PC-3 (cell line): ENCODE measurements at regions of chr11 and their contacts with region 1.

Region 1: DNA sequence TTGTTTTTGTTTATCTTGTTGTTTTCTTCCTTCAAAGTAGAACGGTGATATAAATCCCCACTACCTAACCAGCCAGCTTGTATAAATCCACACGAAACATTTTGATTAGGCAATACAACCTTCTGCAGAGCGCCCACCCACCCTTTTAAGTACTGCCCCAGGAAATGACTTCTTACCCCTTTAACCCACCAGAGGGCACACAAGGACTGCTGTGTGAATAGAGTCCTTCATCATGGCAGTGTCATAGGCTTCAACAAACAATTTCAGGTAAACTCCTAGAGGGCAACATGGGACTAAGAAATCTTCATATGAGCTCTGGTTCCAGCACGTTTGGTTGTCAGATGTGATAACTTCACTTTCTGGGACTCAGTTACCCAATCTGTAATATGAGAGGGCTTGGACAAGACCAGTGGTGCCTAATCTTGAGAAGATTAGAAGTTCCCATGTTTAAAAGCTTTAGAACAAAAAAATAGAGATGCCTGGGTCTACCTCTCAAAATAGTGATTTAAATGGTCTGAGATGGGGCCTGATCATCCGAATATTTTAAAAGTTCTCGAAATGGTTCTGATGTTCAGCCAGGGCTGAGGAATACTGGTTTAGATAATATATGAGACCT is 56.1 kb downstream of the PIWIL4 start:
- DNase-seq: peak; percentile 95
- ATAC-seq: peak; percentile 96
- H3K4me3 ChIP-seq: no peak overlapping the region
- H3K27ac ChIP-seq: no peak overlapping the region
- H3K4me1 ChIP-seq: peaks cover 4% of the 10 kb centered on the region; the same call in 1 of the 2 replicates
- H3K27me3 ChIP-seq: no peaks in the 10 kb centered on the region
- CTCF ChIP-seq: peak; percentile 99

Region 2: GRCh38 chr11:94715225-94715624 is 92.0 kb after region 1 on chr11:
- CTCF ChIA-PET with region 1: no interaction called
- POLR2A ChIA-PET with region 1: no interaction called
- intact Hi-C with region 1: no loop called
- DNase-seq: no peak
- ATAC-seq: no peak
- H3K4me3 ChIP-seq: no peak overlapping the region
- H3K27ac ChIP-seq: no peak overlapping the region
- H3K4me1 ChIP-seq: no peaks in the 10 kb centered on the region
- H3K27me3 ChIP-seq: no peaks in the 10 kb centered on the region
- CTCF ChIP-seq: no peak

Region 3: DNA sequence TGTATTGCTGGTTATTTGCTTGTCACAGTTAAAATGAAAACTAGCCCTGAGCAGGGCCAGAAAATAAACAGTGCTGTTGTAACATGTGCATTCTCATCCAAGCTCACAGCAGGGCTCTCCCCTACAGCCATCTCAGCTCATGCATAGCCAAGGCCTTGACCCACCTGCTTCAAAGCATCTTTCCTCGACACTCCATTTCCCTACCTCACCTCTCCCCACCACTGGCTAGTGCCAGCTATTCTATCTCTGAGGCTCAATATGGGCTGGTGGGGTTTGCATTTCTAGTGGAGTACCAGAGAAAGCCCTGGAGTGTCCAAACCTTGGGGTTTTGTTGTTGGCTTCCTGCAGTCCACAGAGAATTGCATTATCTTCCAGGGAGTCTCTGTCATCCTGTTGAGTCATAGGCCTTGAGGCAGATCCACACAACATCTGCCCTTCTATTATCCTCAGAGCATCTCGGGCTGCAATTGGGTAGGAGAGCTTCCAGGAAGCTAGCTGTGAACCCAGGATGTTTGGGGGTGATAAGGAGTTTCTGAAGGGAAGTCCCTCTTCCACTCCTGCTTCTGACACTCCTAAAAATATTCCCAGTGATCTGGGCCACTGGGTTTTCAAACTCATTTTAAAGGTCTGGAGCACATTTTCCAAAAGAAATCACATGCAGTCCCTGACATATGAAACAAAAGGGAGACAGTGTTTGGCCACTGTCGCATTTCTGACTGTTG is 108.8 kb after region 1 on chr11:
- CTCF ChIA-PET with region 1: interaction called, 13 read pairs
- POLR2A ChIA-PET with region 1: no interaction called
- intact Hi-C with region 1: loop called (anchors 2 kb)
- DNase-seq: peak; percentile 90
- ATAC-seq: peak; percentile 59
- H3K4me3 ChIP-seq: peak overlapping the region; percentile 4; the same call in 1 of the 2 replicates
- H3K27ac ChIP-seq: peak overlapping the region; percentile 96
- H3K4me1 ChIP-seq: peaks cover 90% of the 10 kb centered on the region
- H3K27me3 ChIP-seq: no peaks in the 10 kb centered on the region
- CTCF ChIP-seq: no peak

Region 4: GRCh38 chr11:94762208-94762607 is 139.0 kb after region 1 on chr11:
- CTCF ChIA-PET with region 1: interaction called, 31 read pairs
- POLR2A ChIA-PET with region 1: no interaction called
- intact Hi-C with region 1: loop called (anchors 1 kb)
- DNase-seq: peak; percentile 88
- ATAC-seq: peak; percentile 95
- H3K4me3 ChIP-seq: no peak overlapping the region
- H3K27ac ChIP-seq: no peak overlapping the region
- H3K4me1 ChIP-seq: peaks cover 12% of the 10 kb centered on the region
- H3K27me3 ChIP-seq: no peaks in the 10 kb centered on the region
- CTCF ChIP-seq: peak; percentile 98

Region 5: GRCh38 chr11:94876645-94877442 is 253.6 kb after region 1 on chr11:
- CTCF ChIA-PET with region 1: no interaction called
- POLR2A ChIA-PET with region 1: no interaction called
- intact Hi-C with region 1: loop called (anchors 5 kb)
- DNase-seq: peak; percentile 84
- ATAC-seq: peak; percentile 79
- H3K4me3 ChIP-seq: no peak overlapping the region
- H3K27ac ChIP-seq: peak overlapping the region; percentile 22
- H3K4me1 ChIP-seq: peaks cover 44% of the 10 kb centered on the region
- H3K27me3 ChIP-seq: no peaks in the 10 kb centered on the region
- CTCF ChIP-seq: peak; percentile 58

Region 6: GRCh38 chr11:94973099-94973968 is 350.1 kb after region 1 on chr11 and contains the starts of genes CWC15 and KDM4D:
- CTCF ChIA-PET with region 1: interaction called, 16 read pairs
- POLR2A ChIA-PET with region 1: no interaction called
- intact Hi-C with region 1: loop called (anchors 1 kb)
- DNase-seq: peak; percentile 98
- ATAC-seq: peak; percentile 99
- H3K4me3 ChIP-seq: peak within 1 kb of the TSS; percentile 83
- H3K27ac ChIP-seq: peak within 1 kb of the TSS; percentile 13; the same call in 1 of the 2 replicates
- H3K4me1 ChIP-seq: peaks cover 21% of the 10 kb centered on the region
- H3K27me3 ChIP-seq: no peaks in the 10 kb centered on the region
- CTCF ChIP-seq: no peak
- total RNA-seq, gene CWC15: 56.9 and 63.5 TPM in 2 replicates
- total RNA-seq, gene KDM4D: 2.7 and 4.1 TPM in 2 replicates